ENCODE measurements at regions of chr2 and their contacts with region 1.

Region 1: GRCh38 chr2:17672583-17673317 is 80.9 kb downstream of the SMC6 start:
- DNase-seq: no peak
- H3K4me3 ChIP-seq: no peak overlapping the region
- H3K27ac ChIP-seq: no peak overlapping the region
- H3K4me1 ChIP-seq: peaks cover 5% of the 10 kb centered on the region
- H3K27me3 ChIP-seq: no peaks in the 10 kb centered on the region
- CTCF ChIP-seq: no peak
- POLR2A ChIP-seq: no peak

Region 2: GRCh38 chr2:16767789-16768476 is 904.8 kb before region 1 on chr2:
- CTCF ChIA-PET with region 1: interaction called, 125 read pairs
- POLR2A ChIA-PET with region 1: no interaction called
- dilution Hi-C with region 1: no loop called
- intact Hi-C with region 1: loop called (anchors 1 kb)
- DNase-seq: no peak
- H3K4me3 ChIP-seq: no peak overlapping the region
- H3K27ac ChIP-seq: no peak overlapping the region
- H3K4me1 ChIP-seq: no peaks in the 10 kb centered on the region
- H3K27me3 ChIP-seq: no peaks in the 10 kb centered on the region
- CTCF ChIP-seq: no peak
- POLR2A ChIP-seq: no peak

Region 3: DNA sequence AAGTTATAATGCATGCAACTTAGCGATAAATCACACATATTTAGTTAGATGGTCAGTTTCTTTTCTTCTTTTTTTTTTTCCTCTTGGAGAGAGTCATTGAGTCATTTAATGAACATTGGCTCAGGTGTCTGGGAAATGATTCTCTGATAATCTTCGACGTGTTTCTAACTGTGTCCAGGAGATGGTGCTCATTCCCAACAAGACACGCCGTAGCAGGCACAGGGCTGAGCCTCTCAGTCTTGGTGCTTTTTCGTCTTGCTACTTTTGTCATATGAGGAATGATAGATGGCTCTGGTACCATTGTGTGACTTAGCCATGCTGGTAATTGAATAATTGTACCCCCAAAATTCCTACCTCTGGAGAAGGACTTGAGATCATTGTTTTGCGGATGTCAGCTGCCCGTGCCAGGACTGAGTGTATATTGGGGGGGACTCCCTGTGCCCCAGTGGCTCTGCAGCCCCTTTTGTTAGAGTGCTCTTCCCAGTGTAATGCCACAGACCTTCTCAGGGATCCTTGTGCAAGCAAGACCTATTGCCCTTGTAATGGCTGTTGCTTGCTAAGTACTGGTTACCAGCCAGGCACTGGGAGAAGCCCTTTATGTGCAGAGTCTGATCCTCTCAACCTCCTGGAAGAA is 899.6 kb before region 1 on chr2:
- CTCF ChIA-PET with region 1: interaction called, 125 read pairs
- POLR2A ChIA-PET with region 1: no interaction called
- dilution Hi-C with region 1: no loop called
- intact Hi-C with region 1: loop called (anchors 1 kb)
- DNase-seq: peak; percentile 34
- H3K4me3 ChIP-seq: no peak overlapping the region
- H3K27ac ChIP-seq: no peak overlapping the region
- H3K4me1 ChIP-seq: no peaks in the 10 kb centered on the region
- H3K27me3 ChIP-seq: no peaks in the 10 kb centered on the region
- CTCF ChIP-seq: peak; percentile 31 to 38
- POLR2A ChIP-seq: no peak

Region 4: GRCh38 chr2:17470855-17471641 is 201.7 kb before region 1 on chr2:
- CTCF ChIA-PET with region 1: interaction called, 25 read pairs
- POLR2A ChIA-PET with region 1: no interaction called
- dilution Hi-C with region 1: no loop called
- intact Hi-C with region 1: loop called (anchors 1 kb)
- DNase-seq: peak; percentile 6
- H3K4me3 ChIP-seq: no peak overlapping the region
- H3K27ac ChIP-seq: no peak overlapping the region
- H3K4me1 ChIP-seq: no peaks in the 10 kb centered on the region
- H3K27me3 ChIP-seq: no peaks in the 10 kb centered on the region
- CTCF ChIP-seq: peak in 1 of 2 donors; percentile 11
- POLR2A ChIP-seq: no peak

Region 5: GRCh38 chr2:17482651-17483050 is 190.1 kb before region 1 on chr2:
- CTCF ChIA-PET with region 1: no interaction called
- POLR2A ChIA-PET with region 1: no interaction called
- dilution Hi-C with region 1: no loop called
- intact Hi-C with region 1: no loop called
- DNase-seq: no peak
- H3K4me3 ChIP-seq: no peak overlapping the region
- H3K27ac ChIP-seq: no peak overlapping the region
- H3K4me1 ChIP-seq: no peaks in the 10 kb centered on the region
- H3K27me3 ChIP-seq: no peaks in the 10 kb centered on the region
- CTCF ChIP-seq: no peak
- POLR2A ChIP-seq: no peak

Region 6: DNA sequence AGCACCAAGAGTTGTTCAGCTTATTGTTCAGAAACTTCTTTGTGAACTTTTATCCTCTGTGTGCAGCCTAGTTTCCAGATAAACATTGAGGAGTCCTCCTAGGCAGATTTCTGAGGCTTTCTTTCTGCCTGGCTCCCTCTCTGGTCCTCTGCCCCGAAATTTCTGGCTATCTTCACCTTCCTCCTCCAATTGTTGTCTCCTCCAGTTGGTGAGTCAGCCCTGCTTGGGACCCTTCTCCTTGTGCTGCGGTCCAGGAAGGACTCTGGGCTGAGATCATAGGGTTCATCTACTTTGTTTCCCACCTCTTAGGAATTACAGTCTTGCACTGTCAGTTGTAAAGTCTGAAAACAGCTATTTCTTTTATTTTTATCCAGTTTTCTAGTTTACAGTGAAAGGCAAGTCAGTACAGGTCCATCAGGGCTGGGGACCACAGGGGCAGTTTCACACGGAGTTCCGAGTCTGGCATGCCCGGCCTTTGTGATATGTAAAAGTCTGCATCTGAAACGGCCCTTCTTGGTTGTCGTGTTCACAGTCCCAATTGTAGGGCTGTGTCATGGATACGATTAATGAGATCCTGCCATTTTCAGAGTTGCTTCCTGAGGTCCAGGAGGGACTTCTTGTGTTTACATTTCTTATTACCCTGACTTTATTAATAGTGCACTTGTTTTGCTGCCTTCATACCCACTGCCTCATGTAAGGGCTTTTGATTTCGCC is 19.9 kb before region 1 on chr2:
- CTCF ChIA-PET with region 1: interaction called, 296 read pairs
- POLR2A ChIA-PET with region 1: no interaction called
- dilution Hi-C with region 1: no loop called
- intact Hi-C with region 1: no loop called
- DNase-seq: no peak
- H3K4me3 ChIP-seq: no peak overlapping the region
- H3K27ac ChIP-seq: no peak overlapping the region
- H3K4me1 ChIP-seq: no peaks in the 10 kb centered on the region
- H3K27me3 ChIP-seq: no peaks in the 10 kb centered on the region
- CTCF ChIP-seq: no peak
- POLR2A ChIP-seq: no peak

Region 7: GRCh38 chr2:17658251-17658843 is 14.4 kb before region 1 on chr2:
- CTCF ChIA-PET with region 1: interaction called, 80 read pairs
- POLR2A ChIA-PET with region 1: no interaction called
- dilution Hi-C with region 1: no loop called
- intact Hi-C with region 1: no loop called
- DNase-seq: no peak
- H3K4me3 ChIP-seq: no peak overlapping the region
- H3K27ac ChIP-seq: no peak overlapping the region
- H3K4me1 ChIP-seq: no peaks in the 10 kb centered on the region
- H3K27me3 ChIP-seq: no peaks in the 10 kb centered on the region
- CTCF ChIP-seq: no peak
- POLR2A ChIP-seq: no peak

Region 8: GRCh38 chr2:17689010-17689409 is 16.3 kb after region 1 on chr2:
- CTCF ChIA-PET with region 1: interaction called, 12 read pairs
- POLR2A ChIA-PET with region 1: no interaction called
- dilution Hi-C with region 1: no loop called
- intact Hi-C with region 1: no loop called
- DNase-seq: no peak
- H3K4me3 ChIP-seq: no peak overlapping the region
- H3K27ac ChIP-seq: no peak overlapping the region
- H3K4me1 ChIP-seq: no peaks in the 10 kb centered on the region
- H3K27me3 ChIP-seq: no peaks in the 10 kb centered on the region
- CTCF ChIP-seq: no peak
- POLR2A ChIP-seq: no peak